ENCODE measurements at regions of chr2 and their contacts with region 1.

Region 1: GRCh38 chr2:17830053-17831034 is 14.1 kb downstream of the MSGN1 start:
- DNase-seq: peak; percentile 89
- H3K4me3 ChIP-seq: peak overlapping the region in 1 of 4 donors; percentile 27
- H3K27ac ChIP-seq: no peak overlapping the region
- H3K4me1 ChIP-seq: peaks cover 0 to 20% (median 8%) of the 10 kb centered on the region in 4 donors
- H3K27me3 ChIP-seq: no peaks in the 10 kb centered on the region
- CTCF ChIP-seq: peak; percentile 83 to 88 (median 84)
- EP300 ChIP-seq: no peak
- POLR2A ChIP-seq: no peak

Region 2: GRCh38 chr2:17719562-17720371 is 110.6 kb before region 1 on chr2:
- in situ Hi-C with region 1: loop called in 2 of 4 experiments (anchors 25 kb)
- intact Hi-C with region 1: no loop called
- DNase-seq: no peak
- H3K4me3 ChIP-seq: no peak overlapping the region
- H3K27ac ChIP-seq: no peak overlapping the region
- H3K4me1 ChIP-seq: no peaks in the 10 kb centered on the region
- H3K27me3 ChIP-seq: no peaks in the 10 kb centered on the region
- CTCF ChIP-seq: peak; percentile 70 to 86 (median 76)
- EP300 ChIP-seq: no peak
- POLR2A ChIP-seq: no peak

Region 3: GRCh38 chr2:17759805-17760204 is 70.5 kb before region 1 on chr2:
- in situ Hi-C with region 1: no loop called
- intact Hi-C with region 1: no loop called
- DNase-seq: no peak
- H3K4me3 ChIP-seq: no peak overlapping the region
- H3K27ac ChIP-seq: no peak overlapping the region
- H3K4me1 ChIP-seq: peaks cover under 1 to 30% (median 8%) of the 10 kb centered on the region in 4 donors
- H3K27me3 ChIP-seq: no peaks in the 10 kb centered on the region
- CTCF ChIP-seq: no peak
- EP300 ChIP-seq: no peak
- POLR2A ChIP-seq: no peak

Region 4: GRCh38 chr2:18345848-18346743 is 515.8 kb after region 1 on chr2:
- in situ Hi-C with region 1: no loop called
- intact Hi-C with region 1: no loop called
- DNase-seq: no peak
- H3K4me3 ChIP-seq: no peak overlapping the region
- H3K27ac ChIP-seq: no peak overlapping the region
- H3K4me1 ChIP-seq: no peaks in the 10 kb centered on the region
- H3K27me3 ChIP-seq: no peaks in the 10 kb centered on the region
- CTCF ChIP-seq: no peak
- EP300 ChIP-seq: no peak
- POLR2A ChIP-seq: no peak